ENCODE measurements at regions of chr5 and their contacts with region 1.

Region 1: GRCh38 chr5:144191998-144192397 is 21.3 kb downstream of the KCTD16 start:
- DNase-seq: peak in 7 of 9 experiments; percentile 15 to 93 (median 32)
- ATAC-seq: peak; percentile 43
- H3K4me3 ChIP-seq: peak overlapping the region; percentile 7 to 27
- H3K4me3 Mint-ChIP-seq: no peak overlapping the region
- H3K27ac ChIP-seq: peak overlapping the region; percentile 9 to 81
- H3K27ac Mint-ChIP-seq: no peak overlapping the region
- H3K4me1 ChIP-seq: peaks cover 49% of the 10 kb centered on the region
- H3K4me1 Mint-ChIP-seq: peaks cover 43% of the 10 kb centered on the region
- H3K27me3 ChIP-seq: no peaks in the 10 kb centered on the region
- H3K27me3 Mint-ChIP-seq: no peaks in the 10 kb centered on the region
- CTCF ChIP-seq: peak; percentile 68

Region 2: GRCh38 chr5:142713121-142713706 is 1478.8 kb before region 1 on chr5:
- CTCF ChIA-PET with region 1: no interaction called
- POLR2A ChIA-PET with region 1: no interaction called
- intact Hi-C with region 1: loop called in 1 of 2 experiments (anchors 10 kb)
- DNase-seq: peak; percentile 70 to 93 (median 83)
- ATAC-seq: peak; percentile 95
- H3K4me3 ChIP-seq: peak overlapping the region; percentile 61 to 82
- H3K4me3 Mint-ChIP-seq: peak overlapping the region; percentile 76
- H3K27ac ChIP-seq: peak overlapping the region in 1 of 2 experiments; percentile 49
- H3K27ac Mint-ChIP-seq: peak overlapping the region; percentile 45
- H3K4me1 ChIP-seq: peaks cover 4% of the 10 kb centered on the region
- H3K4me1 Mint-ChIP-seq: peaks cover 18% of the 10 kb centered on the region
- H3K27me3 ChIP-seq: no peaks in the 10 kb centered on the region
- H3K27me3 Mint-ChIP-seq: no peaks in the 10 kb centered on the region
- CTCF ChIP-seq: peak; percentile 98

Region 3: GRCh38 chr5:143002459-143003328 is 1189.3 kb before region 1 on chr5:
- CTCF ChIA-PET with region 1: interaction called, 5 read pairs
- POLR2A ChIA-PET with region 1: interaction called, 4 read pairs
- intact Hi-C with region 1: loop called (anchors 2 kb)
- DNase-seq: peak; percentile 16 to 94 (median 58)
- ATAC-seq: peak; percentile 85
- H3K4me3 ChIP-seq: peak overlapping the region in 1 of 2 experiments; percentile 1
- H3K4me3 Mint-ChIP-seq: peak overlapping the region; percentile 56
- H3K27ac ChIP-seq: peak overlapping the region; percentile 83 to 89
- H3K27ac Mint-ChIP-seq: peak overlapping the region; percentile 87
- H3K4me1 ChIP-seq: peaks cover 43% of the 10 kb centered on the region
- H3K4me1 Mint-ChIP-seq: peaks cover 70% of the 10 kb centered on the region
- H3K27me3 ChIP-seq: no peaks in the 10 kb centered on the region
- H3K27me3 Mint-ChIP-seq: no peaks in the 10 kb centered on the region
- CTCF ChIP-seq: peak; percentile 70

Region 4: DNA sequence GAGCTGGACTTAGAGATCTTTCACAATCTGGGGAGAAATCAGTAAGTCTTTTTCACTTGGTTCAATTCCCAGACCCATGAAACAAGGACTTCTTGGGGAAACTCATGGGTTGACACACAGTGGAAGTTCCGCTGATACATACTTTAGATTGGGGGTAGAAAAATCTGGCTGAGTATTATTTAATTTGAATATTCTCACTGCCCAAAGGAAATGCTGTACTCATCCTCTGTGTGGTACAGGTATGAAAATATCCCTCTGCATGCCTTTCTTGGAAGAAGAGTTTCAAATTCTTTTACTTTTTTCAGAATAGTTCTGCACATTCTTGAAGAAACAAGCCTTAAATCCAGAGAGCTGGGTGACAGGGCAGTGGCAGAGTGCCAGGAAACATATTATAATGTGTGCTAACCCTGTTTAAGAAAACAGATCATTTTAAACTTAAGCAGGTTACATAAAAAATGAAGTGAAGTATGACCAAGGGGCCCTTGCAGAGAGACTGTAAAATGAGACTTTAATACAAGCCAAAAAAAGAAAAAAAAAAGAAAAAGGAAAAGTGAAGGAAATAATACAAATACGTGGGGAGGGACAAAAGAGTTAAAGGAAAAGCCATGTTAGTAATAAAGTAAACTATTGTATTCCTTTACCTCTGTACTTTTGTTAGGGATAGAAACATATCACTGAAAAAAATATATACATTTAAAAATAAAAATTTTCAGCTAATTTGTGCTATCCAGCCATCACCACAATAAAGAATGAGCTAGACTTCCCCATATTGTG is 615.1 kb before region 1 on chr5:
- CTCF ChIA-PET with region 1: no interaction called
- POLR2A ChIA-PET with region 1: no interaction called
- intact Hi-C with region 1: no loop called
- DNase-seq: no peak
- ATAC-seq: no peak
- H3K4me3 ChIP-seq: no peak overlapping the region
- H3K4me3 Mint-ChIP-seq: no peak overlapping the region
- H3K27ac ChIP-seq: no peak overlapping the region
- H3K27ac Mint-ChIP-seq: no peak overlapping the region
- H3K4me1 ChIP-seq: no peaks in the 10 kb centered on the region
- H3K4me1 Mint-ChIP-seq: no peaks in the 10 kb centered on the region
- H3K27me3 ChIP-seq: peaks cover 0 to 3% of the 10 kb centered on the region in 2 experiments
- H3K27me3 Mint-ChIP-seq: peaks cover 2% of the 10 kb centered on the region
- CTCF ChIP-seq: no peak

Region 5: DNA sequence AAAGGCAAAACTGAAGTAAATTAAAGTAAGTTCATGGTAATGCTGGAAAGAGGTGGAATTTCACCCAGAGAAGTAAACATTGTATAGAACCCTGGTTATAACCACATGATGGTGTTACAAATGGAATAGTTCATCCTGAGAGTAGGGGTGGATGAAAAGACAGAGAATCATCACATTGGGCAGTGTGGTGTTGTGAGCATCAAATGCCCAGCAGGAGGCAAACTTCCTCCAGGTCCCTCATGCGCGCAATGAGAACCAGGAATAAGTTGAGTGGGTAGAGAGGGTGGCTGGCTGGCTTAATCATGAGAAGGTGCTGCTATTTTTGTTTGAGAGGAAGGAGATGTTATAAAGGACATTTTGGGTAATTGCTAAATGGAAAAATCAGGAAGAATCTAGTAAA is 543.3 kb before region 1 on chr5:
- CTCF ChIA-PET with region 1: no interaction called
- POLR2A ChIA-PET with region 1: no interaction called
- intact Hi-C with region 1: loop called in 1 of 2 experiments (anchors 1 kb)
- DNase-seq: peak in 2 of 9 experiments; percentile 37 to 51
- ATAC-seq: no peak
- H3K4me3 ChIP-seq: no peak overlapping the region
- H3K4me3 Mint-ChIP-seq: no peak overlapping the region
- H3K27ac ChIP-seq: no peak overlapping the region
- H3K27ac Mint-ChIP-seq: no peak overlapping the region
- H3K4me1 ChIP-seq: no peaks in the 10 kb centered on the region
- H3K4me1 Mint-ChIP-seq: no peaks in the 10 kb centered on the region
- H3K27me3 ChIP-seq: no peaks in the 10 kb centered on the region
- H3K27me3 Mint-ChIP-seq: no peaks in the 10 kb centered on the region
- CTCF ChIP-seq: no peak

Region 6: GRCh38 chr5:144117412-144117811 is 74.6 kb before region 1 on chr5:
- CTCF ChIA-PET with region 1: no interaction called
- POLR2A ChIA-PET with region 1: no interaction called
- intact Hi-C with region 1: no loop called
- DNase-seq: no peak
- ATAC-seq: no peak
- H3K4me3 ChIP-seq: no peak overlapping the region
- H3K4me3 Mint-ChIP-seq: no peak overlapping the region
- H3K27ac ChIP-seq: no peak overlapping the region
- H3K27ac Mint-ChIP-seq: no peak overlapping the region
- H3K4me1 ChIP-seq: no peaks in the 10 kb centered on the region
- H3K4me1 Mint-ChIP-seq: no peaks in the 10 kb centered on the region
- H3K27me3 ChIP-seq: no peaks in the 10 kb centered on the region
- H3K27me3 Mint-ChIP-seq: peaks cover under 1% of the 10 kb centered on the region
- CTCF ChIP-seq: no peak

Region 7: GRCh38 chr5:144142139-144142823 is 49.7 kb before region 1 on chr5:
- CTCF ChIA-PET with region 1: interaction called, 6 read pairs
- POLR2A ChIA-PET with region 1: no interaction called
- intact Hi-C with region 1: loop called in 1 of 2 experiments (anchors 10 kb)
- DNase-seq: peak in 2 of 9 experiments; percentile 32 to 50
- ATAC-seq: peak; percentile 84
- H3K4me3 ChIP-seq: no peak overlapping the region
- H3K4me3 Mint-ChIP-seq: no peak overlapping the region
- H3K27ac ChIP-seq: no peak overlapping the region
- H3K27ac Mint-ChIP-seq: no peak overlapping the region
- H3K4me1 ChIP-seq: no peaks in the 10 kb centered on the region
- H3K4me1 Mint-ChIP-seq: peaks cover 6% of the 10 kb centered on the region
- H3K27me3 ChIP-seq: peaks cover 0 to 2% of the 10 kb centered on the region in 2 experiments
- H3K27me3 Mint-ChIP-seq: peaks cover 17% of the 10 kb centered on the region
- CTCF ChIP-seq: peak; percentile 42

Region 8: GRCh38 chr5:144203750-144204596 is 12.0 kb after region 1 on chr5:
- CTCF ChIA-PET with region 1: interaction called, 22 read pairs
- POLR2A ChIA-PET with region 1: no interaction called
- intact Hi-C with region 1: no loop called
- DNase-seq: peak in 5 of 9 experiments; percentile 24 to 71 (median 28)
- ATAC-seq: peak; percentile 61
- H3K4me3 ChIP-seq: no peak overlapping the region
- H3K4me3 Mint-ChIP-seq: no peak overlapping the region
- H3K27ac ChIP-seq: no peak overlapping the region
- H3K27ac Mint-ChIP-seq: no peak overlapping the region
- H3K4me1 ChIP-seq: no peaks in the 10 kb centered on the region
- H3K4me1 Mint-ChIP-seq: peaks cover 5% of the 10 kb centered on the region
- H3K27me3 ChIP-seq: peaks cover 0 to 7% of the 10 kb centered on the region in 2 experiments
- H3K27me3 Mint-ChIP-seq: peaks cover 62% of the 10 kb centered on the region
- CTCF ChIP-seq: peak; percentile 95

Region 9: GRCh38 chr5:144332265-144332664 is 140.3 kb after region 1 on chr5:
- CTCF ChIA-PET with region 1: no interaction called
- POLR2A ChIA-PET with region 1: no interaction called
- intact Hi-C with region 1: no loop called
- DNase-seq: no peak
- ATAC-seq: no peak
- H3K4me3 ChIP-seq: no peak overlapping the region
- H3K4me3 Mint-ChIP-seq: no peak overlapping the region
- H3K27ac ChIP-seq: no peak overlapping the region
- H3K27ac Mint-ChIP-seq: no peak overlapping the region
- H3K4me1 ChIP-seq: no peaks in the 10 kb centered on the region
- H3K4me1 Mint-ChIP-seq: no peaks in the 10 kb centered on the region
- H3K27me3 ChIP-seq: no peaks in the 10 kb centered on the region
- H3K27me3 Mint-ChIP-seq: no peaks in the 10 kb centered on the region
- CTCF ChIP-seq: no peak

Region 10: DNA sequence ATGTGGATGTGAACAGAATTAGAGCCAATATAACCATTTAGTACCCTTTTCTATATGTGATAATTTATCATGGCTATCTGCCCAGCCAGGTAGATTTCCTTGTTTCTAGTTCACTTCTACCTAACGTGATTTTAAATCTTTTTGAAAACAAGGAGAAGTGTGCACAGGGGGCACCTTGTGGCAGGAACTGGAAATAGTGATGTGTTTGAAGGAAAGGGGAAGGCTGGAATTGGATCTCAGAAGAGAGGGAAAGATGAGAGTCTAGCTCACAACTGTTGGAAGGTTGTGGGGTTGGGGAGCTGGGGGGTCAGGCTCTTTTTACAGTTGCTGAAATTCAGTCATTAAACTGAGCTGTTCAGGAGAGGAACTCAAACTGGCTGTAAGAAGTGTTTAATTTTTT is 198.1 kb after region 1 on chr5:
- CTCF ChIA-PET with region 1: no interaction called
- POLR2A ChIA-PET with region 1: no interaction called
- intact Hi-C with region 1: no loop called
- DNase-seq: no peak
- ATAC-seq: no peak
- H3K4me3 ChIP-seq: no peak overlapping the region
- H3K4me3 Mint-ChIP-seq: no peak overlapping the region
- H3K27ac ChIP-seq: no peak overlapping the region
- H3K27ac Mint-ChIP-seq: no peak overlapping the region
- H3K4me1 ChIP-seq: no peaks in the 10 kb centered on the region
- H3K4me1 Mint-ChIP-seq: no peaks in the 10 kb centered on the region
- H3K27me3 ChIP-seq: no peaks in the 10 kb centered on the region
- H3K27me3 Mint-ChIP-seq: no peaks in the 10 kb centered on the region
- CTCF ChIP-seq: no peak

Measured in CD8-positive, alpha-beta T cell (primary cell).